Vagina (tissue), 2 donors: ENCODE measurements at regions of chr4 and their contacts with region 1.

Region 1: GRCh38 chr4:119212234-119212963 is at the start of gene USP53:
- DNase-seq: peak; percentile 98 to 99
- H3K4me3 ChIP-seq: peak within 1 kb of the TSS; percentile 90 to 91
- H3K27ac ChIP-seq: peak within 1 kb of the TSS; percentile 96
- H3K4me1 ChIP-seq: peaks cover 10% of the 10 kb centered on the region
- H3K27me3 ChIP-seq: no peaks in the 10 kb centered on the region
- CTCF ChIP-seq: peak in 1 of 3 experiments; percentile 54
- POLR2A ChIP-seq: peak in 1 of 2 donors; percentile 93
- total RNA-seq, gene USP53: 53.5 TPM

Region 2: DNA sequence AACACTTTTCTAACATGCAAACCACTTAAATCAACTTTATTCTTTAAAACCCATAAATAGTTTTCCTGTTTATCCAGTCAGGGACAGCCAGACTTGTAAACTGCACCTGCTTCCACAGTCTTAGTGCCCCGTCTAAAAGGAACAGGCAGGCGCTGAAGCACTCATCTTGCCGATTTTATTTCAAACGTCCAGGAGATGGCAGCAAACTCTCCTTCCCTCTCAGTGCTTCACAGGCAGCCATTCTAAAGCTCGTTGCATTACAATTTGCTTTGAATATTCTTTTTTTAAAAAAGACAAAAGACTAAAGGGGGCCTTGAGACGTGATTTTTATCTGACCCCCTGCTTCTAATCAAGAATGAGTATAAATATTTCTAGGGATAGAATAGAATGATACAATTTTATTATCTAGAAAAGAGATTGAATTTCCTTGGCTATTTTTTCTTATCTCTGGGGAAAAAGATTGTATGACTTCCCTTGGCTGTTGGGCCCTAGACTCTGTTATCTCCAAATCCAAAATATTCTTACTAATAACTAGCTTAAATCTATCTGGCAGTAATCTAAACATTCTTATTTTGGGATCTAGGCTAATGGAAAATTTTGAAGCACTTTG is 170.3 kb before region 1 on chr4:
- intact Hi-C with region 1: loop called (anchors 10 kb)
- DNase-seq: no peak
- H3K4me3 ChIP-seq: no peak overlapping the region
- H3K27ac ChIP-seq: peak overlapping the region; percentile 78
- H3K4me1 ChIP-seq: peaks cover 36% of the 10 kb centered on the region
- H3K27me3 ChIP-seq: no peaks in the 10 kb centered on the region
- CTCF ChIP-seq: peak in 2 of 3 experiments; percentile 44 to 53
- POLR2A ChIP-seq: no peak

Region 3: DNA sequence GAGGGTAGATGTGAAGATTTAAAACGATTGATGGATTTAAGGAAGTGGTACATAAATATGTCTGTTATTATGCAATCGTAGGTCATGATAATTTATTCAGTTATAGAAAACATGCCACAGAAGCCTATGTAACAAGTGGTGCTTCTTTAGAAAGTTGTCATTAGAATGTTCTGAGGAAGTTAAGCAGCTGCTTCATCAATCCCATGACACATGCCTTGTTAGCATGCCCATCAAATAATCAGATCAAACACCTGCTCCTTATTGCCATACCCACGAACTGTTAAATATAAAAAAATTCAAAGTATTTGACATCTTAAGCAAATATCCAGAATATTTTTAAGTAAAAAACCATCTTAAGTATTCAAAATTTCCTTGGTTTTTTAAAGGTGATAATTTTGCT is 153.2 kb before region 1 on chr4:
- intact Hi-C with region 1: no loop called
- DNase-seq: no peak
- H3K4me3 ChIP-seq: no peak overlapping the region
- H3K27ac ChIP-seq: no peak overlapping the region
- H3K4me1 ChIP-seq: no peaks in the 10 kb centered on the region
- H3K27me3 ChIP-seq: no peaks in the 10 kb centered on the region
- CTCF ChIP-seq: no peak
- POLR2A ChIP-seq: no peak

Region 4: GRCh38 chr4:119103263-119103662 is 109.1 kb before region 1 on chr4:
- intact Hi-C with region 1: loop called (anchors 10 kb)
- DNase-seq: no peak
- H3K4me3 ChIP-seq: no peak overlapping the region
- H3K27ac ChIP-seq: peak overlapping the region; percentile 53
- H3K4me1 ChIP-seq: peaks cover 32% of the 10 kb centered on the region
- H3K27me3 ChIP-seq: no peaks in the 10 kb centered on the region
- CTCF ChIP-seq: no peak
- POLR2A ChIP-seq: no peak